ENCODE measurements at regions of chr2 and their contacts with region 1.

Region 1: GRCh38 chr2:9205963-9206948 is at the start of gene ASAP2:
- DNase-seq: peak; percentile 65 to 86
- H3K4me3 ChIP-seq: peak within 1 kb of the TSS; percentile 88
- H3K4me3 Mint-ChIP-seq: peak within 1 kb of the TSS; percentile 80
- H3K27ac Mint-ChIP-seq: peak within 1 kb of the TSS; percentile 59
- H3K4me1 ChIP-seq: peaks cover 36% of the 10 kb centered on the region
- H3K4me1 Mint-ChIP-seq: peaks cover 23% of the 10 kb centered on the region
- H3K27me3 ChIP-seq: no peaks in the 10 kb centered on the region
- H3K27me3 Mint-ChIP-seq: no peaks in the 10 kb centered on the region
- CTCF ChIP-seq: peak; percentile 84 to 87
- total RNA-seq, gene ASAP2: 25.6 and 27.8 TPM in 2 replicates

Region 2: GRCh38 chr2:9168821-9169221 is 37.4 kb before region 1 on chr2:
- CTCF ChIA-PET with region 1: interaction called, 4 read pairs
- POLR2A ChIA-PET with region 1: no interaction called
- intact Hi-C with region 1: loop called (anchors 2 kb)
- DNase-seq: peak in 1 of 2 experiments; percentile 18
- H3K4me3 ChIP-seq: no peak overlapping the region
- H3K4me3 Mint-ChIP-seq: peak overlapping the region; percentile 10
- H3K27ac Mint-ChIP-seq: no peak overlapping the region
- H3K4me1 ChIP-seq: peaks cover 55% of the 10 kb centered on the region
- H3K4me1 Mint-ChIP-seq: peaks cover 59% of the 10 kb centered on the region
- H3K27me3 ChIP-seq: no peaks in the 10 kb centered on the region
- H3K27me3 Mint-ChIP-seq: no peaks in the 10 kb centered on the region
- CTCF ChIP-seq: no peak

Region 3: GRCh38 chr2:9178904-9179571 is 27.2 kb before region 1 on chr2:
- CTCF ChIA-PET with region 1: interaction called, 4 read pairs
- POLR2A ChIA-PET with region 1: interaction called, 3 read pairs
- intact Hi-C with region 1: loop called (anchors 1 kb)
- DNase-seq: peak; percentile 51 to 69
- H3K4me3 ChIP-seq: no peak overlapping the region
- H3K4me3 Mint-ChIP-seq: peak overlapping the region; percentile 72
- H3K27ac Mint-ChIP-seq: peak overlapping the region; percentile 99
- H3K4me1 ChIP-seq: peaks cover 44% of the 10 kb centered on the region
- H3K4me1 Mint-ChIP-seq: peaks cover 44% of the 10 kb centered on the region
- H3K27me3 ChIP-seq: no peaks in the 10 kb centered on the region
- H3K27me3 Mint-ChIP-seq: no peaks in the 10 kb centered on the region
- CTCF ChIP-seq: no peak

Region 4: DNA sequence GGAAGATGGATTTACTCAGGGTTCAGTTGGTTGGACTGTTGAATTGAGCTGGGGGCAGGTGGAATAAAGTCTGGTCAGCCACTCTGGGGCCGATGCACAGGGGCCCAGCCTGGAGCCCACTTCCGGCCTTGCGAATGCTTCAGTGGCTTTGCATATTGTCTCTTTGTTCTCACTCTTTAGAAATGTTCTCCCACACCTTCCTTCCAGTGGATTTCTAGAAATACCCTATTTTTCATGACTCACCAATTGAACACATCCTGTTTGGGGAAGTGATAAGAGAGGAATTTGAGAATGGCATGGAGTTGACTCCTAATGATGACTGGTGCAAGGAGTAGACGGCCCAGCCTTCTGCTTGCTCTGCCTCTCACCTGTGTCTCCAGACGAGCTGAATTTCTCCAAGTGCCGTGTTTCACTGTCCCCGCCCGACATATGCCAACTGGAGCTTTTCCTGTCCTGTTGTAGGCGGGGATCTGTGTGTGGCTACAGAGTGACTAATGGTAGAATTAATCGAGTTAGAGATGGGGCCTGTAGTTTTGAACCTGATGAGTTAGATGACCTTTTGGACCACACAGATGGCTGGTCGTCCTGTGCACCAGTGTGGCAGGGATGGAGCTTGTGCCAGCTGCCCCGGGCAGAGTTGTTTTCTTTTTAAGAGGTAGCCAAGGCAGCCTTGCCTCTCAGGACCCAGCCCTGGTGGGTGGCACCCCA is 28.6 kb after region 1 on chr2:
- CTCF ChIA-PET with region 1: interaction called, 3 read pairs
- POLR2A ChIA-PET with region 1: no interaction called
- intact Hi-C with region 1: loop called (anchors 2 kb)
- DNase-seq: peak; percentile 47 to 74
- H3K4me3 ChIP-seq: no peak overlapping the region
- H3K4me3 Mint-ChIP-seq: peak overlapping the region; percentile 38
- H3K27ac Mint-ChIP-seq: peak overlapping the region; percentile 90
- H3K4me1 ChIP-seq: peaks cover 38% of the 10 kb centered on the region
- H3K4me1 Mint-ChIP-seq: peaks cover 35% of the 10 kb centered on the region
- H3K27me3 ChIP-seq: no peaks in the 10 kb centered on the region
- H3K27me3 Mint-ChIP-seq: no peaks in the 10 kb centered on the region
- CTCF ChIP-seq: no peak

Region 5: DNA sequence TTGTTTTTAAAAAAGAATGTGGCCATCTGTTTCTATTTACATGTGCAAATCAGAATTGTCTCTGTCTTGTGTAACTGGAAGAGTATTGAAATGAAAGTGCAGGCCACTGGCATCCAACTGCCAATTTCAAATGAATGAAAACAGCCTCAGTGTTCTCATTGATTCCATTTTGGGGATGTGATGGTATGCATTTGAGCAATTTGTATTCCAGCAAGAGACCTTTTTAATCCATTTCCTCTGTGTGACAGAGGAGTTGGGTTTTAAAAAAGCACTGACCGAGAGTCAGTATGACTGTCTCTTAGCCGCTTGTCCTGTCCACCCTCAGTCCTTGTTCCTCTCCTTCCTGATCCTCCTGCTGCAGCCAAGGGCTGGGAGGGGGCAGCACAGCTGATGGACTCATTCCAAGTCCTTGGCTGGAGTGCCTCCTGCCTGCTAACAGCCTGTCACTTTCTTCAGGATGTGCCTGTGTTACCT is 50.4 kb after region 1 on chr2:
- CTCF ChIA-PET with region 1: no interaction called
- POLR2A ChIA-PET with region 1: no interaction called
- intact Hi-C with region 1: loop called (anchors 2 kb)
- DNase-seq: peak in 1 of 2 experiments; percentile 37
- H3K4me3 ChIP-seq: no peak overlapping the region
- H3K4me3 Mint-ChIP-seq: no peak overlapping the region
- H3K27ac Mint-ChIP-seq: peak overlapping the region; percentile 2
- H3K4me1 ChIP-seq: peaks cover 20% of the 10 kb centered on the region
- H3K4me1 Mint-ChIP-seq: peaks cover 21% of the 10 kb centered on the region
- H3K27me3 ChIP-seq: no peaks in the 10 kb centered on the region
- H3K27me3 Mint-ChIP-seq: no peaks in the 10 kb centered on the region
- CTCF ChIP-seq: peak in 1 of 2 experiments; percentile 10

Region 6: DNA sequence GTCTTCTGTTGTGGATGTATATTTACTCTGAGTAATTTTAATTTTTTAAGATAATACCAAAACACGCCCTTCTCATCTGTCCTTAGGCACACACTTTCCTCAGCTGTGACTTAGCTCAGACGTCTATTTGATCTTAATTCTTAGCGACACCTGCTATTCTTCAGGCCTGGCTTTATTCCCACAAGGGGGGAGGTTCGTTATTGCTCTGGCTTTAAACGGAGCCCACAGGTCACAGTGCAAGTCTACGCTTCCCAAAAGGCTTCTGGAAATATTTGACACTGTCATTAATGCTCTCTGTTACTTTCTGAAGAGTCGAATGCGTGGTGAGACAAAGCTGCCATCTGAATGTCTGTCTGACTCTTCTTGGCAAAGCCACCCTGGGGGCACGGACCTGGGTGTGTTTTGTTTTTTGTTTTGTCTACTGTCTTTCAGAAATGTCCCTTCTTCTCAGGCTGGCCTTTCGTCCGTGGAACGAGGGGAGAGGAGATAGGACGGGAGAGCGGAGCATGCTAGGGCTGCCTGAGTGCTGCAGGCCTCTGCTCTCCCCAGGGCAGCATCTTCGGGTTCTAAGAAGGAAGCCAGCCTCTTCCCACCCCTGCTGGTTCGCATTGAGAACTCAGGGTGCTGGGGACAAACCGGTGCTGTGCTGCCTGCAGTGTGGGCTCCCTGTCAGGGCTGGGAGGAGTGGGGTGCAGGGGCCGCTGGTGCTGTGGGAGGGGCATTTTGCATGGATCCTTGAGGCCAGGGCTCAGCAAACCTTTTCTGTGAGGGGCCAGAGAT is 62.2 kb after region 1 on chr2:
- CTCF ChIA-PET with region 1: no interaction called
- POLR2A ChIA-PET with region 1: no interaction called
- intact Hi-C with region 1: no loop called
- DNase-seq: no peak
- H3K4me3 ChIP-seq: no peak overlapping the region
- H3K4me3 Mint-ChIP-seq: no peak overlapping the region
- H3K27ac Mint-ChIP-seq: peak overlapping the region; percentile 2
- H3K4me1 ChIP-seq: 0 out of 2 replicates have a peak, but pooled peaks cover 3% of the 10 kb centered on the region
- H3K4me1 Mint-ChIP-seq: peaks cover 23% of the 10 kb centered on the region
- H3K27me3 ChIP-seq: no peaks in the 10 kb centered on the region
- H3K27me3 Mint-ChIP-seq: no peaks in the 10 kb centered on the region
- CTCF ChIP-seq: no peak

Region 7: DNA sequence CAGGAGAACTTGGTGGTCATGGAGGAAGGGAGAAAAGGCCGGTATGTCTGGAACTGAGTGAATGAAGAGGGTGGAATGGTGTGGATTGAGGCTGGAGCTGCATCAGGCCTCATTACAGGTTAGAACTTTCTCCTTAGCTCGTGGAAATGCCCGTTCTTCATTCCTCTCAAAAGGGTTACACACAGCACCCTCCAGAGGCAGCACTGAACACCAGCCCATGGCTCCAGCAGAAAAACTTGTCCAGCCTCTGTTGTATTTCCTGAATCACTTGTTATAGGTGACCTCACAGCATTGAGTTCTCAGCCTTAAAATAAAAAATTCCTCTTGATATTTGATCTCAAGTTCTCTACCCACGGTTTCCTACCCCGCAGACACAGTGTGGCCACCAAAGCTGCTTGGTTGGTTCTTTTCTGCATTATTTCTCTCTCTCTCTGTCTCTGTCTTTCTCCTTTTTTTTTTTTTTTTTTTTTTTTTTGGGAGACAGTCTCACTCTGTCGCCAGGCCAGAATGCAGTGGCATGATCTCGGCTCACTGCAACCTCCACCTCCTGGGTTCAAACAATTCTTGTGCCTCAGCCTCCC is 127.4 kb after region 1 on chr2:
- CTCF ChIA-PET with region 1: interaction called, 3 read pairs
- POLR2A ChIA-PET with region 1: no interaction called
- intact Hi-C with region 1: loop called (anchors 1 kb)
- DNase-seq: peak; percentile 69 to 73
- H3K4me3 ChIP-seq: no peak overlapping the region
- H3K4me3 Mint-ChIP-seq: no peak overlapping the region
- H3K27ac Mint-ChIP-seq: no peak overlapping the region
- H3K4me1 ChIP-seq: no peaks in the 10 kb centered on the region
- H3K4me1 Mint-ChIP-seq: peaks cover 26% of the 10 kb centered on the region
- H3K27me3 ChIP-seq: no peaks in the 10 kb centered on the region
- H3K27me3 Mint-ChIP-seq: no peaks in the 10 kb centered on the region
- CTCF ChIP-seq: peak; percentile 55 to 86

Region 8: GRCh38 chr2:9423100-9423921 is 217.1 kb after region 1 on chr2 and contains the starts of genes CPSF3 and ITGB1BP1:
- CTCF ChIA-PET with region 1: interaction called, 5 read pairs
- POLR2A ChIA-PET with region 1: no interaction called
- intact Hi-C with region 1: loop called (anchors 2 kb)
- DNase-seq: peak; percentile 98 to 99
- H3K4me3 ChIP-seq: peak within 1 kb of the TSS; percentile 89
- H3K4me3 Mint-ChIP-seq: no peak within 1 kb of the TSS
- H3K27ac Mint-ChIP-seq: no peak within 1 kb of the TSS
- H3K4me1 ChIP-seq: peaks cover 9% of the 10 kb centered on the region
- H3K4me1 Mint-ChIP-seq: peaks cover 18% of the 10 kb centered on the region
- H3K27me3 ChIP-seq: no peaks in the 10 kb centered on the region
- H3K27me3 Mint-ChIP-seq: no peaks in the 10 kb centered on the region
- CTCF ChIP-seq: no peak
- total RNA-seq, gene CPSF3: 80.6 and 95.0 TPM in 2 replicates
- total RNA-seq, gene ITGB1BP1: 82.4 and 107 TPM in 2 replicates